ENCODE measurements at regions of chr1 and their contacts with region 1.

Region 1: GRCh38 chr1:147890177-147890790 is 12.3 kb upstream of the GJA8 start:
- DNase-seq: peak; percentile 22 to 63 (median 42)
- H3K4me3 ChIP-seq: no peak overlapping the region
- H3K27ac ChIP-seq: no peak overlapping the region
- H3K4me1 ChIP-seq: no peaks in the 10 kb centered on the region
- H3K27me3 ChIP-seq: no peaks in the 10 kb centered on the region
- CTCF ChIP-seq: no peak
- EP300 ChIP-seq: no peak
- POLR2A ChIP-seq: no peak

Region 2: GRCh38 chr1:147273409-147274336 is 616.6 kb before region 1 on chr1:
- intact Hi-C with region 1: loop called in 1 of 4 experiments (anchors 5 kb)
- DNase-seq: peak in 1 of 5 donors; percentile 38
- H3K4me3 ChIP-seq: no peak overlapping the region
- H3K27ac ChIP-seq: no peak overlapping the region
- H3K4me1 ChIP-seq: no peaks in the 10 kb centered on the region
- H3K27me3 ChIP-seq: no peaks in the 10 kb centered on the region
- CTCF ChIP-seq: peak in 2 of 3 donors; percentile 42 to 48
- EP300 ChIP-seq: no peak
- POLR2A ChIP-seq: no peak

Region 3: DNA sequence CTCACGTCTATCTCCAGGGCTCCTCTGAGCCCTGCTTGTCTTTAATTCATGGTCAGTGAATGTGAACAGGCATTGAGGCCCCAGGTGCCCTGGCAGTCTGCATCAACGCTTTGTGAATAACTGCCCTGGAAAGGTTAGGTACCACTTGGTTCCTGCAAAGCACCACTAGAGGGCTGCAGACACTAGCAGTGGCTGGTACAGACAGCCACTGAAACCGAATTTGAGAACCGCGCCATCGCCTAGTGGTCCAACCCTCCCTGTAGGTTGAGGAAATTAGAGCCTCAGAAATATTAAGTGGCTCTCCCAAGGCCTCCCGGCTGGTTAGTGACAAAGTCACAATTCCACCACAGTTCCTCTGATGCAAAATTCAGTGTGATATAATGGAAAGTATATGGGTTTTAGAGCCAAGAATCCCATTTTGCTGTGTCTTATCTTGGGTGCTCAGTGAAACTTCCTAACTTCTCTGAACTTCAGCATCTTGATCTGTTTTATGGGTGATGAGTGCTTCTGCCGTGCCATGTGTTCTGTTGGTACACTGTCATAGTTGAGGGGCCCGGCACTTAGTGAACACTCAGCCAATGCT is 395.2 kb before region 1 on chr1:
- intact Hi-C with region 1: loop called in 1 of 4 experiments (anchors 5 kb)
- DNase-seq: peak; percentile 71 to 83 (median 78)
- H3K4me3 ChIP-seq: no peak overlapping the region
- H3K27ac ChIP-seq: no peak overlapping the region
- H3K4me1 ChIP-seq: peaks cover 5% of the 10 kb centered on the region
- H3K27me3 ChIP-seq: no peaks in the 10 kb centered on the region
- CTCF ChIP-seq: peak; percentile 77 to 90 (median 84)
- EP300 ChIP-seq: no peak
- POLR2A ChIP-seq: no peak

Region 4: GRCh38 chr1:147640553-147641165 is 249.6 kb before region 1 on chr1:
- intact Hi-C with region 1: loop called in 1 of 4 experiments (anchors 5 kb)
- DNase-seq: peak in 4 of 5 donors; percentile 35 to 57 (median 44)
- H3K4me3 ChIP-seq: no peak overlapping the region
- H3K27ac ChIP-seq: no peak overlapping the region
- H3K4me1 ChIP-seq: no peaks in the 10 kb centered on the region
- H3K27me3 ChIP-seq: no peaks in the 10 kb centered on the region
- CTCF ChIP-seq: no peak
- EP300 ChIP-seq: no peak
- POLR2A ChIP-seq: no peak

Region 5: GRCh38 chr1:147723691-147724323 is 166.5 kb before region 1 on chr1:
- intact Hi-C with region 1: loop called in 1 of 4 experiments (anchors 5 kb)
- DNase-seq: no peak
- H3K4me3 ChIP-seq: no peak overlapping the region
- H3K27ac ChIP-seq: no peak overlapping the region
- H3K4me1 ChIP-seq: no peaks in the 10 kb centered on the region
- H3K27me3 ChIP-seq: no peaks in the 10 kb centered on the region
- CTCF ChIP-seq: no peak
- EP300 ChIP-seq: no peak
- POLR2A ChIP-seq: no peak